Psoas muscle (tissue), 8 donors: ENCODE measurements at regions of chr19 and their contacts with region 1.

Region 1: DNA sequence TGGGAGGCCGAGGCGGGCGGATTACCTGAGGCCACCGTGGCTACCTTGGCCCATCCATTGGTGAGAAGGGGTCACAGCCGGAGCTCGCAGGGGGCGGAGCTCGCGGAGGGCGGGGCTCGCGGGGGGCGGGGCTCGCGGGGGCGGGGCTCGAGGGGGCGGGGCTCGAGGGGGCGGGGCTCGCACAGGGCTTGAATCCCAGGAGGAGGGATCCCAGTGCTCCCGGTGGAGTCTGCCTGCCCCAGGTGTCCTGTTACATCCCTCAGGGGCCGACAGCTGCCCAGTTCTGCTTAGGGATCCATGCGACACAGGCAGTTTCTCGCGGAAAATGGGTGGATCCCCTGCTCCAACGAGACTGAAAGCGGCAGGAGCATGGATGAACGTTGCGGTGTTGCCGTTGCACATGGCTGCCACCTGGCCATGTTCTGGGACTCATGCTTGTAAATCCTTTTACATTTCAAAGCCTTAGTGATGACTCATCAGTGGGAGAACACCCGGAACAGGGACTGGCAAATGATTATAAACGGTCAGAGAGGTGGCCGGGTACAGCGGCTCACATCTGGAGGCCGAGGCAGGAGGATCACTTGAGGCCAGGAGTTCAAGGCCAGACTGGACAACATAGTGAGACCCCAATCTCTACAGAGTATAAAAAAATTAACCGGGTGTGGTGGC is 25.1 kb downstream of the TMPRSS9 start:
- DNase-seq: peak; percentile 27 to 70
- ATAC-seq: peak; percentile 75 to 93 (median 84)
- H3K4me3 ChIP-seq: peak overlapping the region; percentile 18
- H3K27ac ChIP-seq: no peak overlapping the region
- H3K4me1 ChIP-seq: peaks cover 5% of the 10 kb centered on the region
- H3K27me3 ChIP-seq: peaks cover 0 to 5% (median 1%) of the 10 kb centered on the region in 3 donors
- CTCF ChIP-seq: no peak

Region 2: GRCh38 chr19:2328401-2329148 is 56.6 kb before region 1 on chr19 and contains the starts of genes LSM7 and SPPL2B:
- intact Hi-C with region 1: loop called in 1 of 2 experiments (anchors 5 kb)
- DNase-seq: peak; percentile 92 to 96
- ATAC-seq: peak; percentile 75 to 83 (median 78)
- H3K4me3 ChIP-seq: peak within 1 kb of the TSS; percentile 93
- H3K27ac ChIP-seq: peak within 1 kb of the TSS; percentile 84
- H3K4me1 ChIP-seq: peaks cover 49% of the 10 kb centered on the region
- H3K27me3 ChIP-seq: no peaks in the 10 kb centered on the region
- CTCF ChIP-seq: no peak
- total RNA-seq, gene LSM7: 42.2 to 89.8 (median 47.8) TPM
- total RNA-seq, gene SPPL2B: 21.1 to 38.0 (median 27.7) TPM